ENCODE measurements at regions of chr4 and their contacts with region 1.

Region 1: GRCh38 chr4:46931981-46932380 is 22.9 kb upstream of the COX7B2 start:
- H3K4me3 Mint-ChIP-seq: no peak overlapping the region
- H3K27ac Mint-ChIP-seq: no peak overlapping the region
- H3K4me1 Mint-ChIP-seq: no peaks in the 10 kb centered on the region
- H3K27me3 Mint-ChIP-seq: peaks cover 5% of the 10 kb centered on the region

Region 2: GRCh38 chr4:46386570-46386969 is 545.4 kb before region 1 on chr4:
- intact Hi-C with region 1: no loop called
- H3K4me3 Mint-ChIP-seq: no peak overlapping the region
- H3K27ac Mint-ChIP-seq: no peak overlapping the region
- H3K4me1 Mint-ChIP-seq: peaks cover 6% of the 10 kb centered on the region
- H3K27me3 Mint-ChIP-seq: peaks cover 31% of the 10 kb centered on the region

Region 3: DNA sequence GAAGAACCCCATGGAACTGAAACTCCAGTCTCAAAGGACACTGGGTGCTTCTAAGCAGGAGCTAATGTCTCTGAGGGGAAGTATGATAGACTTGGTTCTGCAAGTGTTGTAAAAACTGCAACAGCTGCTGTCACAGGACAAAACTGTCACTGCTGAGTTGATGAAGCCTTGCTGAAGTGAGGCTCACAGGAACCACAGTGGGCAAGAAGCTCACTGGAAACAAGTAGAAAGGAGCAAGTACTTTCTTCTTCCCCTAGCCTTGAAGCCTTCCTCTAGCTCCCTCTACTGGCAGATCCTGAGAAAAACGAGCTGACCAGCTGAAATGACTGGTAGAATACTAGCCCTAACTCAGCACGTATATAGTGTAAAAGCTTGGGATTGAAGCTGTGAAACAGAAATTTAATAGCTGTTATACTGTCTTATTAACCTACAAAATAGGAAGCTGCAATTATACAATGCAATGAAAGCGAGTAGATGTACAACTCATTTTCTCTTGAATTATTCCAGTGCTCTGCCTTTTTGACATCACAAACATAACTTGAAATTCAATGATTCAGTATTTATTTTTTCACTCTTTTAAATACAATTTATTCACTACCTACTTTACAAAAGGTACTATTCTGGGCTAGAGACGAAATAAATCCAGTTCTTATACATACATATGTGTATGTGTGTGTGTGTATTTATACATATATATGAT is 190.8 kb after region 1 on chr4:
- intact Hi-C with region 1: loop called (anchors 1 kb)
- H3K4me3 Mint-ChIP-seq: no peak overlapping the region
- H3K27ac Mint-ChIP-seq: peak overlapping the region; percentile 63
- H3K4me1 Mint-ChIP-seq: peaks cover 11% of the 10 kb centered on the region
- H3K27me3 Mint-ChIP-seq: peaks cover 17% of the 10 kb centered on the region

Region 4: DNA sequence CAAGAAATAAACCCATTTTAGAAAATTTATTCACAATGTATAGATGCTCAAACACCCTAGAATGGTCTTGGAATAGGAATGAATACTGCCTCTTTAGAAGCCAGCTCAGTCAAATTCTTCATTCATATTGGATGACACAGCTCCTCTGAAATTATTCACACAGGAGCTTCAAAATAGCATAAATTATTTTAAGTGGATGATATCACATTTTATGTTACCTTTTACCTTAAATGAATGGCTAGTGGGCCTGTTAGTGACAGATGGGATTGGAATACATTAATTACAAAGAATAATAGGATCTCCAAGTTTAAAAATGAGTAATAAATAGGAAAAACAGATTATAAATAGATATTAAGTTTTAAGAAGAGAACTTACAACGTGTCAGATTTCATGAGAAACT is 283.8 kb after region 1 on chr4:
- intact Hi-C with region 1: loop called (anchors 5 kb)
- H3K4me3 Mint-ChIP-seq: no peak overlapping the region
- H3K27ac Mint-ChIP-seq: no peak overlapping the region
- H3K4me1 Mint-ChIP-seq: no peaks in the 10 kb centered on the region
- H3K27me3 Mint-ChIP-seq: peaks cover 4% of the 10 kb centered on the region

Region 5: GRCh38 chr4:47383829-47384427 is 451.9 kb after region 1 on chr4:
- intact Hi-C with region 1: loop called (anchors 5 kb)
- H3K4me3 Mint-ChIP-seq: no peak overlapping the region
- H3K27ac Mint-ChIP-seq: no peak overlapping the region
- H3K4me1 Mint-ChIP-seq: no peaks in the 10 kb centered on the region
- H3K27me3 Mint-ChIP-seq: no peaks in the 10 kb centered on the region

Region 6: DNA sequence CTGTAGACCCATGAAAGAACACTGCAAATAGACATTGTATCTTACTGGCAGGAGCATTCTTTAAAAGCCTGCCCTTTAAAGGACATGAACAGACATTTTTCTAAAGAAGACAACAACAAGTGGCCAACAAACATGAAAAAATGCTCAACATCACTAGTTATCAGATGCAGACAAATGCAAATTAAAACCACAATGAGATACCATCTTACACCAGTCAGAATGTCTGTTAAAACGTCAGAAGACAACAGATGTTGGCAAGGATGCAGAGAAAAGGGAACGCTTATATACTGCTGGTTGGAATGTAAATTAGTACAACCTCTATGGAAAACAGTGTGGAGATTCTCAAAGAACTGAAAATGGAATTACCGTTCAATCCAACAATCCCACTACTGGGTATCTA is 630.3 kb after region 1 on chr4:
- intact Hi-C with region 1: loop called (anchors 10 kb)
- H3K4me3 Mint-ChIP-seq: no peak overlapping the region
- H3K27ac Mint-ChIP-seq: no peak overlapping the region
- H3K4me1 Mint-ChIP-seq: peaks cover 10% of the 10 kb centered on the region
- H3K27me3 Mint-ChIP-seq: no peaks in the 10 kb centered on the region

Measured in dendritic cell treated with granulocyte-macrophage colony-stimulating factor and Interleukin-4, amounts not matched to agents 40 ng/mL and 50 ng/mL, for 4 days (primary cell).